Dendritic cell treated with granulocyte-macrophage colony-stimulating factor and Interleukin-4, amounts not matched to agents 40 ng/mL and 50 ng/mL, for 4 days (primary cell): ENCODE measurements at regions of chr11 and their contacts with region 1.

Region 1: GRCh38 chr11:85694386-85694980 is 8.5 kb upstream of the CCDC89 start:
- H3K4me3 Mint-ChIP-seq: no peak overlapping the region
- H3K27ac Mint-ChIP-seq: no peak overlapping the region
- H3K4me1 Mint-ChIP-seq: peaks cover 14% of the 10 kb centered on the region
- H3K27me3 Mint-ChIP-seq: peaks cover 4% of the 10 kb centered on the region

Region 2: GRCh38 chr11:85394283-85394682 is 300.2 kb before region 1 on chr11:
- intact Hi-C with region 1: no loop called
- H3K4me3 Mint-ChIP-seq: no peak overlapping the region
- H3K27ac Mint-ChIP-seq: no peak overlapping the region
- H3K4me1 Mint-ChIP-seq: no peaks in the 10 kb centered on the region
- H3K27me3 Mint-ChIP-seq: no peaks in the 10 kb centered on the region

Region 3: DNA sequence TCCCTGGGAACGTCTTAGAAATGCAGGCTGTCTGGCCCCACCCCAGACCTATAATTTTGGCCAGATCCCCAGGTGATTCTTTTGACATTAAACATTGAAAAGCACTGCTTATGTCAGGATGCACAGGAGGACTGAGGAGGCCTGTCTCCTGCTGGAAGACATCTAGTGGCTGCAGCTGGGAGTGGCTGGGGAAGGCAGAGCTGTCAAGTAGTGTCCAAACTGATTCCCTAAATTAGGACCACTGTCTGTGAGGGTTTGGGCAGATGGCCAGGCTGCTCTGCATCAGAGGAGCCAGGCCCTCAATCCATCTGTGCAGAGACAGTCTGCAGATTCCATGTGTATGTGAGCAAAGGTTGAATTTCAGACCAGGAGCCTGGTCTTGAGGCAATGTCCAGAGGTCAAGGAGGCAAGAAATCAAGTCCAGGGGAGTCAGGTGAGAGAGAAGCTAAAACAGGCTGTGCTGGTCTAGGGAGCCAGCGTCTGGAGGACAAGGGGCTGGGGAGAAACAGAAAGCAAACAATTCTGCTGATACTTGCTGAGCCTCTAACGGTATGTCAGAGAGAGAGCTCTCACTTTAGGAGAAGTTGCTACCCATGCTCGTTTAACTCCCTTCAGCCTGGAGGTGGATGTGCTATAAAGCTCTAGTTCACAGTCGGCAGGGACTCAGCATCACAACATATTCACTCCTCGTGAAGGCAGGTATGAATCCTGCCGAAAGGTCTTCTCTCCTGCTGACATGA is 131.8 kb after region 1 on chr11:
- intact Hi-C with region 1: loop called (anchors 10 kb)
- H3K4me3 Mint-ChIP-seq: no peak overlapping the region
- H3K27ac Mint-ChIP-seq: no peak overlapping the region
- H3K4me1 Mint-ChIP-seq: peaks cover 7% of the 10 kb centered on the region
- H3K27me3 Mint-ChIP-seq: peaks cover 4% of the 10 kb centered on the region